ENCODE measurements at regions of chr1 and their contacts with region 1.

Region 1: DNA sequence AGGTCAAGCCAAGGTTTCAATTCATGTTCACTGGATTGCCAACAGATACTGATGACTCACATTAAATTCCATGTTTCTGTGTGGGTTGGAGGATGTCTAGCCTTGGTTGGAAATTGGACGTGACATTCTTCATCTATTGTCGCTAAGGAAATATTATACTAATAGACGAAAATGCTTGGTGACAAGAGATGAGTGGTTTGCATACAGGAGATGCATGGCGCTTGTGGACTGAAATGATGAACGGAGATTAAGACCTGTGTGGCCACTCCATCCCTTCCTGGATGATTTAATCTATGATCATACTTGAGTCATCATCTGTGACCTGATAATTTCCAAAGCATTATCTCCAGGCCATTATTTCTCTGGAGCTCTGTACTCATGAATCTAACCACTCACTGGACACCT is 97.0 kb upstream of the CD34 start:
- DNase-seq: no peak

Region 2: GRCh38 chr1:207919523-207920170 is 88.3 kb before region 1 on chr1:
- intact Hi-C with region 1: no loop called
- DNase-seq: no peak

Region 3: DNA sequence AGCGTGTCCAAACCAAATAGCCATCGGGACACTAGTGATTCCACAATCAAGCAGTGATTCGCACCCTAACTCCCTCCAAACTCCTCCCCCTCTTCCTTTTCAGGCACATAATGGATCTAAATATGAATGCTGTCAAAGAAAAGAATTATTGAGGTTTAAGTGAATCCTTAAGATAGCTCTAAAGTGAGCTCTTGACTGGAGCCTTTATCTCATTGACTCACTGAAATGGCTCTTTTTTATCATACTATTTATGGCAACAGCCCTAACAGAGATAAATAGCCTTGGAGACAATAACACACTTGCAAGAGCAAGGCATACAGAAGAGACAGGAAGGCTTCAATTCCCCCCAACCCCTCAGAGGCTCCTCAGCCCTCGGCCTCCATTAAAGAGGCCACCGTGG is 93.0 kb after region 1 on chr1:
- intact Hi-C with region 1: loop called in 1 of 2 experiments (anchors 1 kb)
- DNase-seq: no peak

Region 4: DNA sequence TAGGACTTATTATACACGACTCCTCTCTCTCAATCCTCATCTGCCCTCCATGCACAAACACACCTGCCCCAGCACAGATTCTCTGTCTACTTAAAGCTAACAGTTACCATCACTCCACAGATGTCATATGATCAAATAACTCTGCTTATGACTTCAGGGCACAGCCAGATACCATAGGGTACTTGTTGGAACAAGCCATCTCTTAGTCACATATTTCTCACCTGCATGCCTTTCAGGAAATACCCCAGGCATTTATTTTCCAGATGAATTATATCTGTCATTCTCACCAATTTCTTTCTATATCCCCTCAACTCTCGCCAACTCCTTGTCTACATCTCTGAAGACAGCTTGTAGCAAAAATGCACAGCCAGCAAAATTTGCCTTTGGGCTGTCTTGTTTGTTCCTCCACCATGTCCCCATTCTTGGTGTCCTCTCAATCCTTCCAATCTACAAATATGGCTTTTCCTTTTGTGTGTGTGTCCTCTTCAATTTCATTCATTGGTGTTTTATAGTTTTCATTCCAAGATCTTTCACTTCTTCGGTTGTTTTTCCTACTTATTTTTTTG is 1221.6 kb after region 1 on chr1:
- intact Hi-C with region 1: loop called in 1 of 2 experiments (anchors 10 kb)
- DNase-seq: no peak

Measured in posterior vena cava (tissue), 2 donors.